ENCODE measurements at regions of chr22 and their contacts with region 1.

Region 1: GRCh38 chr22:29394931-29395581 is 6.7 kb upstream of the AP1B1 start:
- DNase-seq: peak; percentile 58
- H3K4me3 Mint-ChIP-seq: no peak overlapping the region
- H3K27ac Mint-ChIP-seq: no peak overlapping the region
- H3K4me1 Mint-ChIP-seq: peaks cover 4% of the 10 kb centered on the region
- H3K27me3 Mint-ChIP-seq: peaks cover 4% of the 10 kb centered on the region

Region 2: DNA sequence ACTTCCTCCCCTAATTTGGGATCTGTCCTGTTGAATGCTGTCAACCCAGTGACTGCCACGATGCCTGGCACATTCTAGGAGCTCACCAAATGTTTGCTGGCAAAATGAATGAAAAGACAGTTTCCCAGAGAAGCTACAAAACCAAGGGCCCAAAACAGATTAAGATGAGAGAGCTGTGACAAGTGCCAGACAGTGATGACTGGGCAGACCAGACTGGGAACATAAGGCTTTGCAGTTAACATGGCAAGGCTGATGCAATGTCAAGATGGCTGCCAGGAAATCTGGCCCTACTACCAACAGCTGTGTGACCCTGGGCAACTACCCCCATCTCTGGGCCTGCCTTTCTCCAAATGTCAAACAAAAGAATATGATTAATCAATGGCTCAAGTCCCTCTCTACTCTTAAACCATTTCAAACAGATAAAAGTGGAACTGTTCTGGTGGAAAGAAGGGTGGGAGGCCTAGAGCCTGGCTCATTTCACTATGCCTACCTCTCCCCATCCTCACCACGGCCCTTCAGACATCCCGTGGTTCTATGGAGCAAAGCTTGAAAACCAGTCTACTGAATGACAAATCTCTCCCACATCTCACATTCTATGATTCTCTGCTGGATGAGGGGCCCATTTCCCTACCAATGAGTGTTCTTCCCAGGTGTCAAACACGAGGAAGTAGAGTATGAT is 19.5 kb before region 1 on chr22:
- intact Hi-C with region 1: no loop called
- DNase-seq: no peak
- H3K4me3 Mint-ChIP-seq: no peak overlapping the region
- H3K27ac Mint-ChIP-seq: peak overlapping the region; percentile 2
- H3K4me1 Mint-ChIP-seq: peaks cover 17% of the 10 kb centered on the region
- H3K27me3 Mint-ChIP-seq: no peaks in the 10 kb centered on the region

Region 3: DNA sequence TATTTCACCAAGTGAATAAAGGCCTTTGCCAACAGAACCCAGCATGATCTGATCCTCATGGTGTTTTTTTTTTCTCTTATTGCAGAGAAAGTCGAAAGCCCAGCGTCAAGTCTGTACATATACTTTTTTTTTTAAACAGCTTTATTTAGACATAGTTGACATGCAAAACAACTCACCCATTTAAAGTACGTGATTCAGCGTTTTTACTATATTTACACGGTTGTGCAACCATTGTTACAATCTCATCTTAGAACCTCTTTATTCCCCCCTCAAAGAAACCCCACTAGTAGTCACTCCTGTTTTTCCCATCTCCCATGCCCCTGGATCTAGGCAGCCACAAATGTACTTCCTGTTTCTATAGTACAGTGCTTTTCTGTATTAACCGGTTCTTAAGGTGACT is 13.9 kb after region 1 on chr22:
- intact Hi-C with region 1: loop called (anchors 1 kb)
- DNase-seq: no peak
- H3K4me3 Mint-ChIP-seq: no peak overlapping the region
- H3K27ac Mint-ChIP-seq: no peak overlapping the region
- H3K4me1 Mint-ChIP-seq: peaks cover 24% of the 10 kb centered on the region
- H3K27me3 Mint-ChIP-seq: peaks cover 2% of the 10 kb centered on the region

Region 4: GRCh38 chr22:29427176-29427760 is 32.2 kb after region 1 on chr22:
- intact Hi-C with region 1: no loop called
- DNase-seq: no peak
- H3K4me3 Mint-ChIP-seq: no peak overlapping the region
- H3K27ac Mint-ChIP-seq: no peak overlapping the region
- H3K4me1 Mint-ChIP-seq: no peaks in the 10 kb centered on the region
- H3K27me3 Mint-ChIP-seq: peaks cover 33% of the 10 kb centered on the region

Region 5: GRCh38 chr22:29524440-29525191 is 129.6 kb after region 1 on chr22:
- intact Hi-C with region 1: loop called (anchors 1 kb)
- DNase-seq: no peak
- H3K4me3 Mint-ChIP-seq: no peak overlapping the region
- H3K27ac Mint-ChIP-seq: no peak overlapping the region
- H3K4me1 Mint-ChIP-seq: no peaks in the 10 kb centered on the region
- H3K27me3 Mint-ChIP-seq: no peaks in the 10 kb centered on the region